Aorta (tissue), 5 donors: ENCODE measurements at regions of chr16 and their contacts with region 1.

Region 1: GRCh38 chr16:50509521-50510341 is 38.5 kb upstream of the NKD1 start:
- DNase-seq: no peak
- ATAC-seq: no peak
- H3K4me3 ChIP-seq: no peak overlapping the region
- H3K27ac ChIP-seq: no peak overlapping the region
- H3K4me1 ChIP-seq: no peaks in the 10 kb centered on the region
- H3K27me3 ChIP-seq: no peaks in the 10 kb centered on the region

Region 2: DNA sequence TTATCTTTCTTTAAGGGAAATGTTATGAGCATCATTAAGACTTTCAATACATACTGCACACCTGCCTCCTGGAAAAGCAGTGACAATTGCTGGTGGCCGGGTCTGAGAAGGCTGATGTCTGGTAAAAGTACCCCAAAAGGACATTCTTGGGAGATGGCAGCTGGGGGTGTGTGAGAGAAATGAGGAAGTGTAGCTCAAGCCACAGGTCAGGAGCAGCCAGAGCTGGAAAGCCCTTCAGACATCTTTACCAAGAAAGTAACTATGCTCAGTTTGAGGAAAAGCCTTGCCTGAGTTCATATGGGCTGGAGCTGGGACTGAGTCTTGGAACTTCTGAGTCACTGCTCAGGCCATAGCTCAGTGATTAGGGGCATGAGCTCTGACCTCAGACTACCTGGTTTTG is 1805.0 kb before region 1 on chr16:
- intact Hi-C with region 1: no loop called
- DNase-seq: no peak
- ATAC-seq: no peak
- H3K4me3 ChIP-seq: no peak overlapping the region
- H3K27ac ChIP-seq: no peak overlapping the region
- H3K4me1 ChIP-seq: no peaks in the 10 kb centered on the region
- H3K27me3 ChIP-seq: no peaks in the 10 kb centered on the region

Region 3: DNA sequence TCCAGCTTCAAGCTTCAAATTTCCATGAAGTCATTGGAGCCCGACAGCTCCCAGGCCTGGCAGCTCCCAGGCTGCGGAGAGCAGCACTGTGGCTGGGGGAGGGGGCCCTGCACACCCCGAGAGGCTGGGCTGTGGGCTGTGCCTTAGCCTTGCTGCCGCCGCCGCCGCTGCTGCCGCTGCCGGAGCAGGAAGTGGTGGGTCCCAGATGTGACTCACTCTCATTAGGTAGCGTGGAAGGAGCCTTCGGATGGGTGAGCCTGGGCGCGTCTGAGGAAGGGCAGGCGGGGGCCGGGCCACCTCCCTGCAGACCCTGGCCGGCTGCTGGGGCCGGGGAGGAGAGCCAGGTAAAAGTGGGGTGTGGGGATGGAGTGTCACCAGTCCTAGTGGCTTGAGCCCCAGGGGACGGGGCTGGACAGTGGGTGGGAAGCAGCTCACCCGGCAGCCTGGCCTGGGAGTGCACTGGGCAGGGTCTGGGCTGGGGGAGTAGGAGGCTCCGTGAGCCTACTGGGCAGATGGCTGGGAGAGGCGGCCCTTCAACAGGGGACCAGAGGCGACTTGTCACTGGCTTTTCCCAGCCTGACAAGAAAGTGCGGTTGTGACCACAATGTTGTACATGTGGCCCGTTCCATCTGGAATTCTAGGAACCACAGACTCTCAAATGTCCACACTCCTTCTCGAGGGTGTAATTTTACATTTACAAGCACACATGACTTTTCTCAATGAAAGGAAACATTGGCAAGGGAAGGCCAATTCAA is 243.2 kb before region 1 on chr16 and contains the start of gene ADCY7:
- intact Hi-C with region 1: loop called in 1 of 2 experiments (anchors 10 kb)
- DNase-seq: peak; percentile 89 to 91
- ATAC-seq: peak; percentile 88
- H3K4me3 ChIP-seq: no peak within 1 kb of the TSS
- H3K27ac ChIP-seq: no peak within 1 kb of the TSS
- H3K4me1 ChIP-seq: no peaks in the 10 kb centered on the region
- H3K27me3 ChIP-seq: no peaks in the 10 kb centered on the region
- total RNA-seq, gene ADCY7: 32.7 to 75.8 TPM

Region 4: GRCh38 chr16:50473356-50473945 is 36.3 kb before region 1 on chr16:
- intact Hi-C with region 1: no loop called
- DNase-seq: no peak
- ATAC-seq: no peak
- H3K4me3 ChIP-seq: no peak overlapping the region
- H3K27ac ChIP-seq: no peak overlapping the region
- H3K4me1 ChIP-seq: no peaks in the 10 kb centered on the region
- H3K27me3 ChIP-seq: no peaks in the 10 kb centered on the region